Psoas muscle (tissue), 8 donors: ENCODE measurements at regions of chr15 and their contacts with region 1.

Region 1: GRCh38 chr15:80567721-80568157 is 127.4 kb upstream of the ABHD17C start:
- DNase-seq: no peak
- ATAC-seq: peak; percentile 55 to 74 (median 70)
- H3K4me3 ChIP-seq: no peak overlapping the region
- H3K27ac ChIP-seq: no peak overlapping the region
- H3K4me1 ChIP-seq: no peaks in the 10 kb centered on the region
- H3K27me3 ChIP-seq: peaks cover 0 to 3% (median 0%) of the 10 kb centered on the region in 3 donors
- CTCF ChIP-seq: peak; percentile 57

Region 2: DNA sequence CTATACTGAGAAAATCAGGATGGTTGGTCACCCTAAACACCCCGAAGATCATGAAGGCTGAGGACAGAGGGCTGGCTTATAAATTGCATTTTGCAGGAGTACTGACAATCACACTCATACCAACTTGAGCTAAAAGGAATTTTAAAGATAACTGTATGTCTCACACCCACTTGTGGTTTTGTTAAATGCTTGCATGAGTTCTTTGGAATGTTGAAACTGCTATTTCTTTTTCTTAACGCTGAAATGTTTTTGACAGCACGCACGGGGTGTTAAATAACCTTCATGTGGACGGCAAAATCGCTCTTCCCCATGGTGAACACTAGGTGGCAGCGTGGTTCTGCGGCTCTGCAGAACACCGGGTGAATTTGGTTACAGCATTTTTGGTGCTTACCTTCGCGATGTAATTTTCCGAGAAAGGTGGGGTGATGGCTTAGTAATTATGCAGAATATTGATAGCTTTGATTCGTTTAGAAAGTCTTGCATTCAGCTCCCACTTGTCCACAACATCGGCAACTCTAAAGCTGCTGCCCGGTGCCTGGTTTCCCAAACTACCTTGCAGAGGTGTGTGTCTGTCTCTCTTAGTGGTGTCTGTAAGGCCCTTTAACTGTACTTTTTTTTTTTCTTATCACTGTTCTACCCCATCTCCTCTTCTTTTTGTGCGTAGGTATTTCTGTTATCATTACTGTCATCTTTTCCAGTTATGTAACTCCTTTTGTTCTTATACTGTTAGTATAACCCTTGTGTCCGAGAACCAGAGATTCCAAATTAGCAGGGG is 111.9 kb before region 1 on chr15:
- intact Hi-C with region 1: loop called (anchors 5 kb)
- DNase-seq: no peak
- ATAC-seq: peak; percentile 77 to 92 (median 80)
- H3K4me3 ChIP-seq: no peak overlapping the region
- H3K27ac ChIP-seq: no peak overlapping the region
- H3K4me1 ChIP-seq: no peaks in the 10 kb centered on the region
- H3K27me3 ChIP-seq: no peaks in the 10 kb centered on the region
- CTCF ChIP-seq: peak; percentile 94

Region 3: GRCh38 chr15:80695104-80695910 is 127.6 kb after region 1 on chr15 and contains the start of gene ABHD17C:
- intact Hi-C with region 1: loop called in 1 of 2 experiments (anchors 10 kb)
- DNase-seq: peak; percentile 65 to 76
- ATAC-seq: peak; percentile 70 to 80 (median 78)
- H3K4me3 ChIP-seq: peak within 1 kb of the TSS; percentile 78
- H3K27ac ChIP-seq: peak within 1 kb of the TSS; percentile 83
- H3K4me1 ChIP-seq: peaks cover 11% of the 10 kb centered on the region
- H3K27me3 ChIP-seq: no peaks in the 10 kb centered on the region
- CTCF ChIP-seq: no peak
- total RNA-seq, gene ABHD17C: 1.1 to 2.9 (median 2.1) TPM

Region 4: DNA sequence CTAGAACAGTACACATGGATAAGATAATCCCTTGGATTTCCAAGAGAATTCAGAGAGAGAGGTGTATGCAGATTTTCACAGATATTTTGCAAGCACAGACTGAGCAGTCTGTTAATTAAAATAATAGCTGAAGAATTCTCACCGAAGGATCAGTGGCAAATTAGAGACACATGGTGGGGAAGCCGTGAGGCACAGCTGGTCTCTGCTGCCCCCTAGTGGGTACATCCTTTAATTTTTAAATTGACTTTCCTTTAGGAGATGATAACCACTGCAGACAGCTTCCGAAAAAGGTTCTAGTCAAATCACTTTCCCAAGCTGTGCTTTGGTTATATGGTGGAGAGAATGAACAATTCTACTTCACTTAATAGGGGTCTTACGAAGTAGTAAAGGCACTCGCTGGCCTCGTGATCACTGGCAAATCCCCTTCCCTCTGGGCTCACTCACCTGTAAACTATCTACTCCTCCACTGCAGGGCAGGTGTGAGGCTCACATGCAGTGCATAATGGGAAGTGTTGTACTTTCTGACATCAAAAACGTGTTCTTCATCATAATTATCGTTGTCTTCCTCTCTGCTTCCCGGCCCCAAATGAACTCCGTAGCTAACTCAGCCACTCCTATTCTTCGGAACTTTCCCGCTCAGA is 402.4 kb after region 1 on chr15:
- intact Hi-C with region 1: loop called (anchors 5 to 10 kb)
- DNase-seq: peak in 1 of 2 donors; percentile 42
- ATAC-seq: peak; percentile 68 to 85 (median 72)
- H3K4me3 ChIP-seq: no peak overlapping the region
- H3K27ac ChIP-seq: no peak overlapping the region
- H3K4me1 ChIP-seq: peaks cover 3% of the 10 kb centered on the region
- H3K27me3 ChIP-seq: no peaks in the 10 kb centered on the region
- CTCF ChIP-seq: peak; percentile 91